Sigmoid colon (tissue), 7 donors: ENCODE measurements at regions of chr2 and their contacts with region 1.

Region 1: GRCh38 chr2:53422979-53423378 is 344.6 kb upstream of the CHAC2 start:
- DNase-seq: no peak
- H3K4me3 ChIP-seq: no peak overlapping the region
- H3K27ac ChIP-seq: no peak overlapping the region
- H3K4me1 ChIP-seq: no peaks in the 10 kb centered on the region
- H3K27me3 ChIP-seq: no peaks in the 10 kb centered on the region
- CTCF ChIP-seq: peak in 2 of 4 experiments; percentile 31 to 39
- EP300 ChIP-seq: no peak
- POLR2A ChIP-seq: no peak

Region 2: GRCh38 chr2:53498210-53498609 is 75.2 kb after region 1 on chr2:
- intact Hi-C with region 1: no loop called
- DNase-seq: no peak
- H3K4me3 ChIP-seq: no peak overlapping the region
- H3K27ac ChIP-seq: peak overlapping the region; percentile 29 to 68 (median 55)
- H3K4me1 ChIP-seq: peaks cover 0 to 36% (median 31%) of the 10 kb centered on the region in 4 donors
- H3K27me3 ChIP-seq: no peaks in the 10 kb centered on the region
- CTCF ChIP-seq: no peak
- EP300 ChIP-seq: no peak
- POLR2A ChIP-seq: no peak

Region 3: GRCh38 chr2:53739032-53739431 is 316.1 kb after region 1 on chr2:
- intact Hi-C with region 1: loop called (anchors 10 kb)
- DNase-seq: no peak
- H3K4me3 ChIP-seq: no peak overlapping the region
- H3K27ac ChIP-seq: no peak overlapping the region
- H3K4me1 ChIP-seq: no peaks in the 10 kb centered on the region
- H3K27me3 ChIP-seq: no peaks in the 10 kb centered on the region
- CTCF ChIP-seq: no peak
- EP300 ChIP-seq: no peak
- POLR2A ChIP-seq: no peak

Region 4: DNA sequence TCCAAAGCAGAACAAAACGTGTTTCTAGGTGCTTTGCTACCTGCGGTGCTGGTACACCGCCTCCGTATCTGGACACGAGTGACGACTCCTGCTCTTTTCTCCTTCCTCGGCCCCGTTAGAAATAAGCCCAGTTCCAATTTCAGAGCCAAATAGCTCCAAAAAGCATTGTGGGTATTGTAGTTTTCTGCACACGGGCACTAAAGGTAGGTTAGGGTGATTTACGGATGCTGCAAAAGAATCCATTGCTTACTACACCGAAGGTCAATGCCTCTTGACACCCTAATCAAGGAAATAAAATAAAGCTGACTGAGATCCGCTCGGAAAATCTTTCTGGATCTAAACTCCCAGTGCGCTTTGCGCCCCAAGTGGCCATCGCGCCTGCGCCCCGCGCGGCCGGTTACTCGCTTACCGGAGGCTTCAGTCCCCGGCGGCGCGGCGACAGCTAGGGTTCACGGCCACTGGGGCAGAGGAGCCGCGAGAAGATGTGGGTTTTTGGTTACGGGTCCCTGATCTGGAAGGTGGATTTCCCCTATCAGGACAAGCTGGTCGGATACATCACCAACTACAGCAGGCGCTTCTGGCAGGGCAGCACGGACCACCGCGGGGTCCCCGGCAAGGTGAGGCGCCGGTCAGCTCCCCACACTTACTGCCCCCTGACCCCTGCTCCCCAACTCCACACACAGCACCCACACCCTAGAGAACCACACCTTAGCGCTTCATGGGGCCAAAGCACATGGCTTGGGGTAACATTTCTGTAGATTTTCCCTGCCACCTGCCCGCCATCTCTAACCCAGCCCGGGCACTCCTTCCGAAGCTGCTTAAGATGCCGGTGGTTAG is 344.6 kb after region 1 on chr2 and contains the start of gene CHAC2:
- intact Hi-C with region 1: loop called (anchors 10 kb)
- DNase-seq: peak; percentile 89
- H3K4me3 ChIP-seq: peak within 1 kb of the TSS; percentile 54 to 85 (median 80)
- H3K27ac ChIP-seq: peak within 1 kb of the TSS; percentile 75 to 83 (median 78)
- H3K4me1 ChIP-seq: peaks cover 0 to 18% (median 11%) of the 10 kb centered on the region in 4 donors
- H3K27me3 ChIP-seq: no peaks in the 10 kb centered on the region
- CTCF ChIP-seq: peak in 3 of 4 experiments; percentile 33 to 52 (median 48)
- EP300 ChIP-seq: no peak
- POLR2A ChIP-seq: no peak
- total RNA-seq, gene CHAC2: 0.68 to 3.8 (median 2.4) TPM